ENCODE measurements at regions of chr5 and their contacts with region 1.

Region 1: GRCh38 chr5:149153751-149154610 is 12.7 kb downstream of the ABLIM3 start:
- DNase-seq: peak; percentile 89 to 95
- ATAC-seq: peak; percentile 96
- H3K4me3 ChIP-seq: no peak overlapping the region
- H3K27ac ChIP-seq: peak overlapping the region; percentile 87 to 97 (median 92)
- H3K4me1 ChIP-seq: peaks cover 61 to 89% of the 10 kb centered on the region in 2 donors
- H3K27me3 ChIP-seq: no peaks in the 10 kb centered on the region
- CTCF ChIP-seq: peak in 1 of 5 experiments; percentile 8
- POLR2A ChIP-seq: peak; percentile 58 to 61

Region 2: GRCh38 chr5:148963664-148964063 is 190.3 kb before region 1 on chr5:
- in situ Hi-C with region 1: no loop called
- intact Hi-C with region 1: loop called (anchors 5 kb)
- DNase-seq: no peak
- ATAC-seq: no peak
- H3K4me3 ChIP-seq: no peak overlapping the region
- H3K27ac ChIP-seq: peak overlapping the region; percentile 90 to 96 (median 93)
- H3K4me1 ChIP-seq: peaks cover 24 to 41% of the 10 kb centered on the region in 2 donors
- H3K27me3 ChIP-seq: no peaks in the 10 kb centered on the region
- CTCF ChIP-seq: no peak
- POLR2A ChIP-seq: no peak

Region 3: GRCh38 chr5:149172261-149172660 is 18.3 kb after region 1 on chr5:
- in situ Hi-C with region 1: no loop called
- intact Hi-C with region 1: loop called (anchors 1 kb)
- DNase-seq: no peak
- ATAC-seq: no peak
- H3K4me3 ChIP-seq: no peak overlapping the region
- H3K27ac ChIP-seq: peak overlapping the region; percentile 52 to 90 (median 81)
- H3K4me1 ChIP-seq: peaks cover 43 to 53% of the 10 kb centered on the region in 2 donors
- H3K27me3 ChIP-seq: no peaks in the 10 kb centered on the region
- CTCF ChIP-seq: no peak
- POLR2A ChIP-seq: no peak

Region 4: GRCh38 chr5:149228618-149229297 is 74.8 kb after region 1 on chr5:
- in situ Hi-C with region 1: loop called in 2 of 4 experiments (anchors 5 to 25 kb)
- intact Hi-C with region 1: no loop called
- DNase-seq: peak; percentile 53 to 69
- ATAC-seq: peak; percentile 99
- H3K4me3 ChIP-seq: no peak overlapping the region
- H3K27ac ChIP-seq: peak overlapping the region; percentile 17 to 70 (median 52)
- H3K4me1 ChIP-seq: peaks cover 14 to 17% of the 10 kb centered on the region in 2 donors
- H3K27me3 ChIP-seq: no peaks in the 10 kb centered on the region
- CTCF ChIP-seq: peak; percentile 75 to 92 (median 82)
- POLR2A ChIP-seq: no peak

Region 5: DNA sequence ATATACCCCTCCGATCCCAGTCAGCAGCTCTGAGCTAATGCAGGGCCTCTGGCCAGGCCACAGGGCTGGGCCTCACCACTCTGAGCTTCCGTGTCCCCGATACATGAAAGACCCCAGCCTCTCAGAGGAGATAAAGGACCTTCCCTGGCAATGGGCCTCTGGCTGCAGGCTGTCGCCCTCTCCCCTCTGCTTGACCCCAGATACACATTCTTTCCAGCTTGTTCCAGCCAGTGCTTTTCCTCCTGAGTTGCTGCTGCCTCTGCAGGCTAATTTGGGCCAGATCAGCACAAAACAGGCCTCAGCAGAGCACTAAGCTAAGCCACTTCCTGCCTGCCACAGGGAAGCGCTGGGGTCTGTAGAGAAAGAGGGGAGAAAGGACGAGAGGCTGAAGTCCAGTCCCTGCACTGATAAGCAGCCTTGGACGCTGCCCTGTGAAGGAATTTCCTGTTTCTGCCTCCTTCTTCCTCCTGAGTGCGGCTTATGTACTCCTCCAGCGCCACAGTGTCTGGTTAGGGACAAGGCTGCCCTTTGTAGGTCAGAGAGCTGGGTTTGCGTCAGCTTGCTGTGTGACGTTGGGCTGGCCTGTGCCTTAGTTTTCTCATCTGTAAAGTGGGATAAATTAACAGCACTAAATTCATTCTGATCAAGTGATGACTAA is 298.2 kb after region 1 on chr5:
- in situ Hi-C with region 1: no loop called
- intact Hi-C with region 1: loop called (anchors 10 kb)
- DNase-seq: no peak
- ATAC-seq: no peak
- H3K4me3 ChIP-seq: no peak overlapping the region
- H3K27ac ChIP-seq: peak overlapping the region; percentile 85 to 98 (median 96)
- H3K4me1 ChIP-seq: peaks cover 53 to 82% of the 10 kb centered on the region in 2 donors
- H3K27me3 ChIP-seq: no peaks in the 10 kb centered on the region
- CTCF ChIP-seq: no peak
- POLR2A ChIP-seq: no peak

Region 6: DNA sequence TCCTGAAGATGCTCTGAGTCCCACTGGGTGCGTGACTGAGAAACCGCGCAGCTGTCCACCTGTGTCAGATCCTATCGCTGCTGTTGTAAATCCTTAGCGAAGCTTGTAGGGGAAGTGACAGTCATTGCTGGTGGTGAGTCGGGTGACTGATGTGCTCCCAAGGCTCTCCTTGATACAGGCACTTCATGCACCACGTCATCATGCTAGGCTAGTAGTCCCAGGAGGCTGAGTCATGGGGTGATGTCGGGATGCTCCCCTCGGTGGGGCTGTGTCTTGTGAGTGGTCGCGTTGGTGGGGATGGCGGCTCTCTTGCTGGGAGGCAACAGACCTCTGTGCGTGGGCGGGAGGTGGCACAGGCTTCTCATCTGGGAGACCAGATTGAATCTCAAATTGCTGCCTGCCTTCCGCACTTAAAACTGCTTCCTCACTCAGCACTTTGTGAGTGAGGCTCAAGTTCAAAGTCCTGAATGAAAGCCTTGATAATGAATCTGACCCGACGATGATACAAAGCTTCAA is 312.5 kb after region 1 on chr5:
- in situ Hi-C with region 1: no loop called
- intact Hi-C with region 1: no loop called
- DNase-seq: peak in 1 of 2 donors; percentile 70
- ATAC-seq: peak; percentile 48 to 64
- H3K4me3 ChIP-seq: peak overlapping the region in 2 of 4 donors; percentile 6 to 16
- H3K27ac ChIP-seq: peak overlapping the region; percentile 69 to 84 (median 80)
- H3K4me1 ChIP-seq: peaks cover 24 to 31% of the 10 kb centered on the region in 2 donors
- H3K27me3 ChIP-seq: no peaks in the 10 kb centered on the region
- CTCF ChIP-seq: no peak
- POLR2A ChIP-seq: peak; percentile 12 to 24

Region 7: DNA sequence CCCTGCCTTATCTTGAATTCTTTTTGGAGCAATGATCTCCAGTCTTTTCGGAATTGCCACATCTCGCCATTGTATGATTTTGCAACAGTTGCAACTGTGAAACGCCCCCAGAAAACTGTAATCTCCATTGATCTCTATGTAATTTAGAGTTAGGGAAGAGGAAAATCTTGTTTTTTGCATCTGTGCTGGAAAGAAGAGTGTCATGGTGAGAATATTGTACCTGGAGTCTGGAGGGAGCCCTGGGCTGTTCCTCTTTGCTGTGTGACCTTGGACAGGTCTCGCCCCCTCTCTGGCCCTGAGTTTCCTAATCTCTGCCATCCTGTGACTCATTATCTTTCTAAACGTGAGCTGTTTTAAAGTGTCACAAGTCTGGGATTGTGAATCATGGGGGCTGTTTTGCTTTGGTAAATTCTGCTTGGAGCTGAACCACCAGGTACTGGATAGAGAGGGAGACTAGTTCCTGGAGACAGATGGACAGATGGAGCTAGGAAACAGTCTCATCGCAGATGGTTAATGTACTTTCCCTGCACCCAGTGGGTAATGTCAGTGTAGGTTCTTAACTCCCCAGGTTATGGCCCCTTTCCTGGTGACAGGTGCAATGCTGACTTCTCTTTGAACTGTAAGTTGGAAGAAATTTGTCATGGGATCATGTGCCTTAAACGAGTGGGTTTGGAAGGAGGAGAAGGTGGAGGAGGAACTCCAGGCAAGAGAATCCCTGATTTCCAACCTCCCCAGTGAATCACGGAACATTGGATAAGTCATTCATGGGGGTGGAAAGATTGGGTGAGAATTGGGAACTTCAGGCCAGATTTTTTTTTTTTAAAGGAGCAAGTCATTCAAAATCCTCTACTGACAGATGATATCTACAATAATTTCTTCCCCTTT is 595.7 kb after region 1 on chr5:
- in situ Hi-C with region 1: no loop called
- intact Hi-C with region 1: loop called (anchors 10 kb)
- DNase-seq: no peak
- ATAC-seq: peak; percentile 25 to 34
- H3K4me3 ChIP-seq: no peak overlapping the region
- H3K27ac ChIP-seq: peak overlapping the region; percentile 84 to 99 (median 92)
- H3K4me1 ChIP-seq: peaks cover 47 to 58% of the 10 kb centered on the region in 2 donors
- H3K27me3 ChIP-seq: no peaks in the 10 kb centered on the region
- CTCF ChIP-seq: no peak
- POLR2A ChIP-seq: no peak